ENCODE measurements at regions of chr1 and their contacts with region 1.

Region 1: DNA sequence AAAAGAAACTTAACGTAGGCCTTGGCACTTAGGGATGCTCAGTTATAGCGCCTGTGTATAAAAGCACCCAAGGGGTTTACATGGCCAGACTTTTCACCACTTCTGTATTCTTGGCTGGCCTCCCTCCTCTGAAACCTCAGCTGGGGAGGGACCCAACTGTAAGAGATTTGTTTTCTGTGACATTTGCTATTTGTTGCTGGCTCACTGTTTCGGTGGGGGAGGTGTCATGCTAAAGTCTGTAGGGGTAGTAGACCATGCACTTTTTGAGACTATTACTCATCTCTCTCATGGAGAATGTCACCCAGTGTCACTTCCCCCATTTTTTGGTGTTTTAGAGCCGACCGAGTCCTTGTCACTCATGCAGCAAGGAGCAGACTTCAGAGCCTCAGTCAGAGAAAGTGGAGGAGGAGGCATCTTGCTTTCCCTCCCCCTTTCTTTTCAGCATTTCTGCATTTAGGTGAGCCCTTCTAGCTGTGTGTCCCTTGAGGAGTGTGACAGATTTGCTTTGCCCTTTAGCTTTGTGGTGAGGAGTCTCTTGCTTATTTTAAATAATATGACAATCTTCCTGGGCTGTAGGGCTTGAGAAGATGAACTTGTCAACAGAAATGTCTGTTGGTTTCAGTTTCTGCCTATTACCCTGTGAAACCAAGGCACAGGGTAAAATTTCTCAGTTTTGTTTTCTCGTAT is 160.1 kb downstream of the FASLG start:
- DNase-seq: no peak

Region 2: GRCh38 chr1:172906778-172907592 is 88.0 kb after region 1 on chr1:
- intact Hi-C with region 1: no loop called
- DNase-seq: no peak

Region 3: DNA sequence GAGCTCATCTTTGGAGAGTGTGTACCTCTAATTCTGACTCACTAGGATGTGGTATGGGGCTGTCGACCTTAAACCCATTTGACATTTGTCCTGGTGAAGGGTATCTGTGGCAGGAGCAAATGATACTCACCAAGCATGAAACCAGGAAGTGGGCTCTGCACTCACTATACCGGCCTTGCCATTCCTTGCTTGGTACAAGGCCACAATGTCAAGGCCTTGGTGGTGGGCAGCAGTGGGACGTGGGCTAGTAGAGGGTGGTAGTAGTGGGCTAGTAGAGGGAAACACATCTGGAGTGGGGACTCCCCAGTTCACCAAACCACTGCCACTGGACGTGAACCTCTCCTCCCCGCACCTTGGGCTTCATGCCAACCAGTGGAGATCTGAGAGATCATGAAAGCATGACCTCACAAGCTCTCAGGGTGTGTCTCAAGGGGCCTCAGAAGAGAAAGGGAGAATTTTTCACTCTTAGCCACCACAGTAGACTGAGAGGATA is 376.7 kb after region 1 on chr1:
- intact Hi-C with region 1: loop called in 1 of 2 experiments (anchors 5 kb)
- DNase-seq: no peak

Measured in posterior vena cava (tissue), 2 donors.